CD4-positive, alpha-beta memory T cell (primary cell): ENCODE measurements at regions of chr2 and their contacts with region 1.

Region 1: DNA sequence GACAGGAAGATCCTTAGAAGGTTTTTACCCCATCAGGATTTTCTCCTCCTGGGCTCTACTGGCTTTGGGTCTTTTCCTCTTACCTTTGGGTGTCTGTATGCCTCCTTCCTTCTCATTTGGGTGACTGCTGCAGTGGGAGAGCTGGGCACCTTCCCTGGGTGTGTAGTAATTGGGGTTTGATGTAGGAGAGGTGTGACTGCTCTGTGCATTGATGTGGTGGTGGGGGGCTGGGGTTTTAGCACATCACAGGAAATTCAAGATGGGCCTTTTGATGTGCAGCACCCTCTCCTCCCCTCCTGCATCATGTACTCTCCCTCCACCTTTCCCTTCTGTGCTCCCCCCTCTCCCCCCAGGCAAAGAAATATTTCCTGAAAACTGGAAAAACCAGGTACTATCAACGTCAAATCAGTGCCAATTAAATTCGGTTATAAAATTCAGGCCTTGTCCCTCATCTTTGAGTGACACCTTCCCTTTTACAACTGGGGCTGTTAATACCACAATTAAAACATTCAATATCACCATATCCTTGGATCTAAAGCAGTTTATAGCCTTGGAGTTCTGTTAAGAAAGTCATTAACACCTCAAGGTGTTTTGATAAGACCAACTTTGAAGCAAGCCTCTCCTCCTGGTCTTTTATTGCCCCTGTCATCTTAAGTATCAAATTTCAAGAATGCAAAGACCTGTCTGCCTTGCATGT is 23.3 kb downstream of the EDAR start:
- DNase-seq: peak; percentile 54 to 68 (median 64)
- H3K4me3 ChIP-seq: no peak overlapping the region
- H3K4me3 Mint-ChIP-seq: peak overlapping the region; percentile 56 to 86 (median 77)
- H3K27ac ChIP-seq: no peak overlapping the region
- H3K27ac Mint-ChIP-seq: peak overlapping the region; percentile 19 to 89 (median 43)
- H3K4me1 ChIP-seq: peaks cover 51% of the 10 kb centered on the region
- H3K4me1 Mint-ChIP-seq: peaks cover 45 to 81% (median 66%) of the 10 kb centered on the region in 4 donors
- H3K27me3 ChIP-seq: no peaks in the 10 kb centered on the region
- H3K27me3 Mint-ChIP-seq: no peaks in the 10 kb centered on the region

Region 2: DNA sequence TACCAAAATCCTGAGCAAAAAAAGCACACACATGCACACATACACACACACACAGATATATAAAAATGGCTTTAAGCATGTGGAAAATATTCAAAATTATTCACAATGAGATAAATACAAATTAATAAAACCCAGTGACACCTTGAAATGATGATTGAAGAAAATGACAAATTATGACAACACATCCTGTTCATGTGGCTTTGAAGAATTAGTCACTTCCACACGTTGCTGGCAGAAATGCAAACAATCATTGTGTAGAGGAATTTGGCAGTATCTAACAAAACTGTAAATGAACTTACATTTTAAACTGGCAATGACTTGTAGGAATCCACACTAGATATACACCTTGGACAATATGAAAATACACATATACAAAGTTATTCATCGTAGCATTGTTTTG is 1234.8 kb before region 1 on chr2:
- CTCF ChIA-PET with region 1: no interaction called
- POLR2A ChIA-PET with region 1: no interaction called
- intact Hi-C with region 1: no loop called
- DNase-seq: no peak
- H3K4me3 ChIP-seq: no peak overlapping the region
- H3K4me3 Mint-ChIP-seq: no peak overlapping the region
- H3K27ac ChIP-seq: no peak overlapping the region
- H3K27ac Mint-ChIP-seq: no peak overlapping the region
- H3K4me1 ChIP-seq: no peaks in the 10 kb centered on the region
- H3K4me1 Mint-ChIP-seq: no peaks in the 10 kb centered on the region
- H3K27me3 ChIP-seq: no peaks in the 10 kb centered on the region
- H3K27me3 Mint-ChIP-seq: no peaks in the 10 kb centered on the region

Region 3: GRCh38 chr2:108927936-108928659 is 37.6 kb before region 1 on chr2:
- CTCF ChIA-PET with region 1: interaction called, 7 read pairs
- POLR2A ChIA-PET with region 1: no interaction called
- intact Hi-C with region 1: loop called (anchors 2 kb)
- DNase-seq: peak in 4 of 5 donors; percentile 41 to 52 (median 46)
- H3K4me3 ChIP-seq: no peak overlapping the region
- H3K4me3 Mint-ChIP-seq: no peak overlapping the region
- H3K27ac ChIP-seq: no peak overlapping the region
- H3K27ac Mint-ChIP-seq: peak overlapping the region in 1 of 7 donors; percentile 2
- H3K4me1 ChIP-seq: peaks cover 7% of the 10 kb centered on the region
- H3K4me1 Mint-ChIP-seq: peaks cover 4 to 14% (median 7%) of the 10 kb centered on the region in 4 donors
- H3K27me3 ChIP-seq: no peaks in the 10 kb centered on the region
- H3K27me3 Mint-ChIP-seq: no peaks in the 10 kb centered on the region